ENCODE measurements at regions of chr15 and their contacts with region 1.

Region 1: DNA sequence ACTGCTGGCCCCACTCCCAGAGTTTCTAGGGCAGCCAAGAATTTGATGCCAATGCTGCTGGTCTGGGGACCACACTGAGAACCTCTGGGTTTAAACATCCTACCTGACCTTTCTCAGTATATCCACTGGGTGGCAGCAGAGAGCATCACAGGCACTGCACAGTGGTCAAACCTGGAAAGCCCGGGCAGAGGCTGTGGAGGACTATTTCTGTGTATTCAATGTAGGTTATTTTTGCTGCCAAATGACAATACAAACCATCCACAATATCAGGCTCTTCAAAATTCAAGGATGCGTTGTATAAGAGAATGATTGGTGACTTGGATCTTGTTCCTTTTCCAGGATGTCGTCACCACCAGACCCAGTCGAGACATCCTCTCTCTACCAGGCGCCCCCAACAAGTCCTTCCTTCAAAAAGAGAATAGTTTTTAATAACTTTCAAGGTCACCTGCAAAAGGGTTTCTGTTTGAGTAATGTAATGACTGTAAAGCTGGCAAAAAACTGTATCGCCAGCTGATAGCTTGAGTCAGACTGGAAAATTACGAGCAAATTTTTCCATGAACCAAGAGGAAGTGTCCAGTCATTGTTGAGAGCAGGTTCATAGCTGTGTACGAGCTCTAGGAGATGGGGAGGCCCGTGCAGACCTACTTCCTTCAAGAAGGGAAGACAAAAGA is 30.5 kb upstream of the MYZAP start:
- DNase-seq: peak; percentile 72 to 77
- ATAC-seq: peak; percentile 94 to 98
- H3K4me3 ChIP-seq: no peak overlapping the region
- H3K27ac ChIP-seq: peak overlapping the region in 1 of 2 experiments; percentile 8; a peak in 2 of 6 replicates
- H3K4me1 ChIP-seq: peaks cover 19% of the 10 kb centered on the region
- CTCF ChIP-seq: peak; percentile 96
- EP300 ChIP-seq: no peak
- POLR2A ChIP-seq: no peak
- RAD21 ChIP-seq: peak; percentile 87

Region 2: GRCh38 chr15:57427367-57427821 is 133.8 kb before region 1 on chr15:
- CTCF ChIA-PET with region 1: no interaction called
- POLR2A ChIA-PET with region 1: no interaction called
- DNase-seq: peak; percentile 70 to 71
- ATAC-seq: peak; percentile 91 to 94
- H3K4me3 ChIP-seq: no peak overlapping the region
- H3K27ac ChIP-seq: peak overlapping the region; percentile 54 to 66
- H3K4me1 ChIP-seq: peaks cover 43% of the 10 kb centered on the region
- CTCF ChIP-seq: no peak
- EP300 ChIP-seq: no peak
- POLR2A ChIP-seq: no peak
- RAD21 ChIP-seq: no peak

Region 3: DNA sequence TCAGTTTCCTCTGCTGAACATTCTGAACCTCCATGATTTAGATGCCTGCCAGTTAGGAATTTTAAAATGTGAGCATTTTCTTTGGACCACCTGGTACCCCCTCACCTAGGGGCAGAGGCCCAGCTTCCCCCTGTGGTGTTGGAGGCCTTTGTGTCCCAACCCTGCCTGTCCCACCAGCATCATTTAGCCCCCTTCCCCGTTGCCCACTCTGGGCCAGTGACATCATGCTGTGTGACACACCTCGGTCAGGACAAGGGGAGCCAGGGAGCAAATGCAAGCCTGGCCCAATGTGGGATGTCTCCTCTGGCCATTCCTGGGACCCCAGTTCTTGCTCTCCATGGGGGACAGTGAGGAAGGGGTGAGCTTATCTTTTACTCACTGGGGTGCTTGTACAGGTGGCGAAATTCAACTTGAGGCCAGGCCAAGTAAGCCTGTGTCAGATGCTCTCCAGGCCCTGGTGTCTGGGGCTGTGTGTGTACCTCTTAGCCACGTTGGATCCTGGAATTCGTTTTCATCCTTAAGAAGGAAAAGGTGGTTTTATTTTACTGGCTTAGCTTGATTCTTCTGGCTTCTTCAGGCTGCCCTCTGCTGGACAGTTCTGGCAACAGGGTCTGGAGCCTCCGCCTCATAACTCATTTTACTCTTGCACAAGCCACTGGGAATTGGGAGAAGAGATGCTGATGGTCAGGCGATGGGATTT is 19.2 kb before region 1 on chr15:
- CTCF ChIA-PET with region 1: interaction called, 270 read pairs
- POLR2A ChIA-PET with region 1: no interaction called
- DNase-seq: peak; percentile 74 to 77
- ATAC-seq: peak; percentile 68 to 88
- H3K4me3 ChIP-seq: no peak overlapping the region
- H3K27ac ChIP-seq: no peak overlapping the region
- H3K4me1 ChIP-seq: peaks cover 4% of the 10 kb centered on the region; the same call in 2 of the 3 replicates
- CTCF ChIP-seq: peak; percentile 90
- EP300 ChIP-seq: no peak
- POLR2A ChIP-seq: no peak
- RAD21 ChIP-seq: peak; percentile 75 to 84

Region 4: DNA sequence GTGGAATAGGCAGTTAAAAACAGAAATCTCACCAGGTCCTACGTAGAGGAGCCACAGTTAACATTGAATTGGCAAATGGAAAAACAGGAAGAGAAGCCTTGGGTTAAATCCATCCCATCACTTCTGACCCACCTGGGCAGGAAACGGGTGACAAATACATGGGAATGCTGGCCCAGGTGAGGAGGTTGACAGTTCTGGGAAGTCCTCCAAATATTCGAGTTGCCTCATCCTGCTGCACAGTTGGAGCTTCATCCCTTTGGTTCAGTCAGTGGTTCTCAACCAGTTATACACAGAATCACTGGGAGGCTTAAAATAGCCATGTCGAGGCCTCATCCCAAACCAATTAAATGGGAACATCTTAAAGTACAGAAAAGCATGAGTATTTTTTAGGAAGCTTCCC is 35.8 kb after region 1 on chr15:
- CTCF ChIA-PET with region 1: interaction called, 22 read pairs
- POLR2A ChIA-PET with region 1: no interaction called
- DNase-seq: no peak
- ATAC-seq: no peak
- H3K4me3 ChIP-seq: no peak overlapping the region
- H3K27ac ChIP-seq: no peak overlapping the region
- H3K4me1 ChIP-seq: peaks cover 5% of the 10 kb centered on the region; the same call in 1 of the 3 replicates
- CTCF ChIP-seq: no peak
- EP300 ChIP-seq: no peak
- POLR2A ChIP-seq: no peak
- RAD21 ChIP-seq: no peak

Region 5: DNA sequence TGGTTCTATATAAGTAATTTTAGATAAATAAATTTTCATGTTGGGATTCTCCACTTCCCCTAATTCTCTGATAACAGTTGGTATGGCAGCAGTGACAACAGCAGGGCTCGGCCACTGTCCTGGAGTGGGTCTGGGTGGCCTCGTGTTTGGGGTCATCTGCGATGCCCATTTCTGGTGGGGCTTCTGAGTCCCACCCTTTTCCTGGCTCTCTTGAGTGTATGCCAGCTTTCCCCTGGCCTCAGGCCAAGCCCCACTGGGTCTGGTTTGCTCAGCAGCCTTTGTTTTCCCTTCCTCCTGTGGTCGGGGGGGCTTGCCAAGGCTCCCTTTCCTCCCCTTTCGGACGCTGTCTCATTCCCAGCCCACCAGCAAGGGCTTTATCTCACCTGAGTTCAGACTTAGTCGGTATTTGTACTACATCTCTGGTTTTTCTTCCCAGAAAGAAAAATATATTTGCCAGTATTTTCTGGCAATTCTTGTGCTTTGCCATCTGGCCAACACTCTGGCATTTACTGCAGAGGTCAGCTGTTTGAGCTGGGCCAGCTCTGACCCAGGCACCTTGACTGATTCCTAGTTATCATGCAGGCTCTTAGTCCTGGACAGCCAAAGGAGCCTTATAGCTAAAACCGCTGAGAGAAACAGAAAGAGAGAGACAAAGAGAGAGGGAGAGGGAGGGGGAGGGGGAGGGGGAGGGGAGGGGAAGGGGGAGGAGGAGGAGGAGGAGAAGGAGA is 65.7 kb after region 1 on chr15:
- CTCF ChIA-PET with region 1: interaction called, 16 read pairs
- POLR2A ChIA-PET with region 1: no interaction called
- DNase-seq: no peak
- ATAC-seq: no peak
- H3K4me3 ChIP-seq: no peak overlapping the region
- H3K27ac ChIP-seq: no peak overlapping the region
- H3K4me1 ChIP-seq: no peaks in the 10 kb centered on the region
- CTCF ChIP-seq: no peak
- EP300 ChIP-seq: no peak
- POLR2A ChIP-seq: no peak
- RAD21 ChIP-seq: no peak

Region 6: GRCh38 chr15:57654153-57654852 is 93.1 kb after region 1 on chr15:
- CTCF ChIA-PET with region 1: interaction called, 17 read pairs
- POLR2A ChIA-PET with region 1: no interaction called
- DNase-seq: no peak
- ATAC-seq: no peak
- H3K4me3 ChIP-seq: no peak overlapping the region
- H3K27ac ChIP-seq: no peak overlapping the region
- H3K4me1 ChIP-seq: no peaks in the 10 kb centered on the region
- CTCF ChIP-seq: no peak
- EP300 ChIP-seq: no peak
- POLR2A ChIP-seq: no peak
- RAD21 ChIP-seq: no peak

Region 7: DNA sequence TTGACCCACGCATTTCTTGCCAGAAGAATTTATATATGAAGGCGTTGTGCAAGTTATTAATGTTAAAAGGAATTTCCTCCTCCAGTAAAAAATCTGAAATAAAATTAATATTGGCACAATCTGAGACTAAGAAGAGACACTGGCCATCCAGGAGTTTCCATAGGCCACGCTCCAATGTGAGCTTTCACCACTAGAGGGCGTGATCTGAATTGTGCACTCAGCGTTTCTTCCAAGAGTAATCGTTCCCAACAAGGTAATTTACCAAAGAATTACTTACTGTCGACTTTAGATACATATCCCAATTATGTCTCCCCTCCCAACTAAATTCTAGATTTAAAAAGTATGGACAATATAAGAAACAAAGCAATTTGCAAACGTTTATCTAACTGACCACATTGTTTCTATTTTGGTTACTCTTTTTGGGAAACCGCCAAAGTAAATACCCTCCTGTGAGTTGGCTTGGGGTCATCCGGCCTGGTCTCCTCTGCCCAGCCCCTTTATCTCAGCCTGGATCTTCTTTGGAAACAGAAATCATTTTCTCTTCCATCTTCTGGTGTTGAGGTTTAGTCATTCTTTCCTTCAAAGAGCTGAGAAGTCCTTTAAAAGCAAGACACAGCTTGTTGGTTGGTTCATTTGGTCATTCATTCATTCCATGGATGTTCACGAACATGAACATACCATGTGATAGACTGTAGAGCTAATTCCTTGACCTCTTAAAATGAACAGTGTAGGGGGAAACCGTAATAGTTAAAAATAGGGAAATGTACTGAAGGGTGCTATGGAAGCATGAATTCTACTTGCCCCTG is 171.6 kb after region 1 on chr15:
- CTCF ChIA-PET with region 1: interaction called, 21 read pairs
- POLR2A ChIA-PET with region 1: no interaction called
- DNase-seq: peak; percentile 46 to 64
- ATAC-seq: peak; percentile 81 to 93
- H3K4me3 ChIP-seq: no peak overlapping the region
- H3K27ac ChIP-seq: no peak overlapping the region
- H3K4me1 ChIP-seq: no peaks in the 10 kb centered on the region
- CTCF ChIP-seq: peak; percentile 94
- EP300 ChIP-seq: no peak
- POLR2A ChIP-seq: no peak
- RAD21 ChIP-seq: peak; percentile 57 to 61